Activated CD4-positive, alpha-beta T cell treated with anti-CD3 and anti-CD28 coated beads for 36 hours (primary cell): ENCODE measurements at regions of chr4 and their contacts with region 1.

Region 1: DNA sequence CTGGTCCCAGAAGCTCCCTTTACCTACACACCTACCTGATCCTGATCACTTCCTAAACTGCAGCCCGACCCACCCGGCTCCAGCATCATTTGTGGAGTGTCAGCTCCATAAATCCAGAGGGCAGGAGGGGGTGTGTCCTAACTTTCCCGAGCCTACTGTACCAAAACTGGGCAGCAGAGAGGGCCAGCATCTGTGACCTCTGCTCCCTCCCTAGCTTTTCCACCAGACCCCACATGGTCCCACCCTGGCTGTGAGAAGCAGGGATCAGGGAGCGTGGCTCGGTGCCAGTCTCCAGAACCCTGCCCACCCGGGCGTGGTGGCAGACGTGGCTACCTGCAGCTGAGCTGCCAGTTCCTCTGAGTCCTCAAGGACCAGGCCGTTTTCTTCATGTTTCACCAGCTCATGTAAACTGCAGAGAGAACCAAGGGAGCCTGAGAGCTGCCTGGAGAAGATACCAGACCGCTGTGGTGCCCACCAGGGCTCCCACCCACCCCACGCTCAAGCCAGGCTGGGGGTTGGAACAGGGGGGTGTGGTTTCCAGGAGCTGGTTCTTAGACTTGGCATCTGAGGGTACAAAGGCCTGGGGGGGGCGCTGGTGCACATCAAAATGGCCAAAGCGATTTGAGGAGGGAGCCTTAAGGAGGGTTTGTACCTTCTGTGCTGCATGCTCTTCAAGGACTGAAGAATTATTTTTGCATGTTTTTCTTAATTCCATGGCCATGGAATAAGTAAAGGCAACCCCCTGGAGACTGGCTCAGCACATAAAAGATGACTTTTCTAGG is 76.7 kb upstream of the DRD5 start:
- DNase-seq: peak; percentile 17
- ATAC-seq: no peak
- H3K4me3 Mint-ChIP-seq: no peak overlapping the region
- H3K27ac Mint-ChIP-seq: no peak overlapping the region
- H3K4me1 Mint-ChIP-seq: peaks cover 5% of the 10 kb centered on the region
- H3K27me3 Mint-ChIP-seq: no peaks in the 10 kb centered on the region

Region 2: DNA sequence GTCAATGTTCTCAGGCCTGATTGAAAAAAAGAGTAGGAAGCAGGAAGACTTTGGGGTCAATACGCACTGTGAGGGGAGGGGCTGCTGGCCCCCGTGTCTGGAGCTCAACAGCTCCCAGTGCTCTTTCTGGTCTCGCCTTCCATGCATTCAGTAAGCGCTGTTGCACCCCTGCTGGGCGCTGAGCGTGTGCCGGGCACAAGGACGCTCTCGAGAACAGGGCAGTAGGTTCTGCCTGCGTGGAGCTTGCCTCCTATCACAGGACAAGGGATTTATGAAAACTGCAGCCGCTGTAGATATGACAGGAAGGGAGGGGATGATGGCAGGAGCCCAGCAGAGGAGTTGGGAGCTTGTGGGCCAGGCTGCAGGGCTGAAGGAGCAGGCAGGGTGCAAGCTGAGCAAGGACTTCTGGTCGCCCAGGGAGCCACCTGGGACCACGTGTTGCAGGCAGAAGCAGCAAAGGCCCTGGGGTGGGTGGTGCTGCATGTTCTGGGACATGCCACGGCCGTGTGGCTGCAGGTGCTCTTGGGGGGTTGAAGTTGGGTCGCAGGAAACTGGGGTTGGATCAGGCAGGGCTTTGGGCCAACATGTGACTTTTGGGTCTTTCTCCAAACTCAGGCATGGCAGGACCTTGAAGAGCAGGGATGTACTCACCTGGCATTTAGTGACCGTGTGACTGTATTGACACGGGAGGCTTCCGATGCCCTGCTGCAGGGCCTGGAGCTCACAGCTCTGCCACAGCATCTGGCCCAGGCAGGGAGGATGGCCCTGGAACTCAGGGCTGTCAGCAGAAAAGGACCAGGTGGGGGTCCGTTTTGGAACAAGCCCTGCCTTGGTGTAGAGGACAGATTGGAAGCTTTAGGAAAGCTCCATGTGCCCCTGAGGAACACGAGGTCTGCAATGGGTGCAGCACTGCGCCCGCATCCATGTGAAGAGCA is 1014.3 kb before region 1 on chr4:
- CTCF ChIA-PET with region 1: no interaction called
- POLR2A ChIA-PET with region 1: no interaction called
- intact Hi-C with region 1: no loop called
- DNase-seq: no peak
- ATAC-seq: no peak
- H3K4me3 Mint-ChIP-seq: no peak overlapping the region
- H3K27ac Mint-ChIP-seq: no peak overlapping the region
- H3K4me1 Mint-ChIP-seq: no peaks in the 10 kb centered on the region
- H3K27me3 Mint-ChIP-seq: peaks cover 11% of the 10 kb centered on the region

Region 3: DNA sequence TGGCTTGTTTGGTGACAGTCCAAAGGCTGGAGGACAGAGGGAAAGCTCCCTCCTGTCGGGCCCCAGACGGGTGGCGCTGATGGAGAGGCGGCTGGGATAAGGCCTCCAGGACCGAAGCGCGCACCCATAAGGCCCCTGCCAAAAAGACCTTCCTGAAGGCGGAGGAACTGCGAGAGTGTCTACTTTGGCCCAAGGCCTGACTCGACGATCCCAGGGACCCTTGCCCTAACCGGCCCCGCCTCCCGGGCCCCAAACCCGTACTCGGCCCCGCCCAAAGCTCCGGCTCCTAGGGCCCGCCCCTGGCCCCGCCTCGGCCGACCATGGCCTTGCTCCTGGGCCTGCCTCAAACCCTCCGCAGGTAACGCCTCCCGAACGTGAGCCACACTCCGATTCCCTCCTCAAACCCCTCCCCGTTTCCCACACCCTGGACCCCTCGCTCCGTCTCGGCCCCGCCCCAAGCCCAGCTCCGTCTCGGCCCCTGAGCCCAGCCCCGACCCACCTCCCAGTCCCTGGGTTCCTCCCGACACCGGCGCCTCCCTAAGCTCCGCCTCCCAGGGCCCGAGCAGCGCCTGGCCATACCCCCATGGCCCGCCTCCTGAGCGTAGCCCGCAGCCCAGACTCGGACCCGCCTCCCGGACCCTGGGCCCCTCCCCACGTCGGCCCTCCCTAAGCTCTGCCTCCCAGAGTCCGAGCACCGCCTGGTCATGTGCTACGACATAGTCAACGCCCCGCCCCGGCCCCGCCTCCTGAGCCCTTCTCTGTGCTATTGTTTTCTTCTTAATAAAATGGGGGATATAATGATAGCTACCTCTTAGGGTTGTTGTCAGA is 13.3 kb before region 1 on chr4:
- CTCF ChIA-PET with region 1: interaction called, 11 read pairs
- POLR2A ChIA-PET with region 1: no interaction called
- intact Hi-C with region 1: no loop called
- DNase-seq: peak; percentile 95
- ATAC-seq: peak; percentile 100
- H3K4me3 Mint-ChIP-seq: peak overlapping the region; percentile 76
- H3K27ac Mint-ChIP-seq: peak overlapping the region; percentile 76
- H3K4me1 Mint-ChIP-seq: peaks cover 23% of the 10 kb centered on the region
- H3K27me3 Mint-ChIP-seq: no peaks in the 10 kb centered on the region

Region 4: DNA sequence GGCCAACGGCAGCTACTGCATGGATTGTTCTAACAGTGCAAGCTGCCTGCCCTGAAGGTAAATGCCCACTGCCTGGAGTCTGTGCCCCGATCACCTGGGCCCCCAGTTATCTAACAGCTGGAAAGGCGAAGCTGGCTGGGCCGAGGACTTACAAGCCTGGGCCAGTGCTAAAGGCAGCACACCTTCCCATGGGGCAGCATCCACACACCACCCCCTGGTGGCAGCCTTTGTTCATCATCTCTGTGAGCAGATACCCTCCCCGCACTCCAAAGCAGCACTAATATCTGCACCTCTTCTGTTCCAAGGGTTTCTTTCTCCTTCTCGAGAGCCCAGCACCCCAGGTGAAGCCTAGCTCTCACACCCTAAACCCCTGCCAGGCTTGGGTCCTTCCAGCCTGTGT is 309.0 kb after region 1 on chr4:
- CTCF ChIA-PET with region 1: interaction called, 25 read pairs
- POLR2A ChIA-PET with region 1: no interaction called
- intact Hi-C with region 1: loop called (anchors 1 kb)
- DNase-seq: peak; percentile 78
- ATAC-seq: peak; percentile 53
- H3K4me3 Mint-ChIP-seq: no peak overlapping the region
- H3K27ac Mint-ChIP-seq: no peak overlapping the region
- H3K4me1 Mint-ChIP-seq: no peaks in the 10 kb centered on the region
- H3K27me3 Mint-ChIP-seq: no peaks in the 10 kb centered on the region